ENCODE measurements at regions of chr3 and their contacts with region 1.

Region 1: DNA sequence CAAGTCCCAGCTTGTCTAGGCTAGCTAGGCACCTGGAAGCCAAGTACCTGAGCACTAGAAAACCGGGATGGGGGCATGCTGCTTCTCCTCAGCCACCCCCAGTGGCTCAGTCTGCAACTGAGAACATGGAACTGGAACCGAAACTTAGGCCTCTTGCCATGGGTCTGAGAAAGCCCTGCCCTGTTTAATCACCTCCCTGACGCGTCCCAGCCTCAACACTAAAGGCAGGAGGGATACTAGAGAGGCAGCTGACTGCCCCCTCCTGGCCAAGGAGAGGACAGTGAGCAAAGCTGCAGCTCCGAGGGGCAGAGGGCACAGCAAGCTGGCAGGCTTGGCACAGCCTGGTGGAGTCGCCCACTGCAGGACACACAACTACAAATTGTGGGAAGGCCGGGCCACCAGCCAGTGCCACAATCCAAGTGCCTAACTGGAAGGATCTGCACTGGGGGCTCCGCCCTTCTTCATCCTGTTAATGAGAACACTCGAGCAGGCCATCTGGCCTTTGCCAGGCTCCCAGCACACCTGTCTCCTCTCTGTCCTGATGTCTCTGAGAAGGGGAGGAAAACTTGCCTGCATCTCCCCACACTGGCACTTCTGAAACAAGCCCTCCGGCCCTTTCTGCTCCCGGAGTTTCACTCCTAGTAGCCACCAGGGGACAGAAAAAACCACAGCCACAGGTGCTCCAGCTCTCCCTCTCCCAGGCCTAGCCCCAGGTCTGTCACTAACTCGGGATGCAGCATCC is 53.7 kb downstream of the BDH1 start:
- DNase-seq: peak; percentile 86
- CTCF ChIP-seq: peak; percentile 81

Region 2: DNA sequence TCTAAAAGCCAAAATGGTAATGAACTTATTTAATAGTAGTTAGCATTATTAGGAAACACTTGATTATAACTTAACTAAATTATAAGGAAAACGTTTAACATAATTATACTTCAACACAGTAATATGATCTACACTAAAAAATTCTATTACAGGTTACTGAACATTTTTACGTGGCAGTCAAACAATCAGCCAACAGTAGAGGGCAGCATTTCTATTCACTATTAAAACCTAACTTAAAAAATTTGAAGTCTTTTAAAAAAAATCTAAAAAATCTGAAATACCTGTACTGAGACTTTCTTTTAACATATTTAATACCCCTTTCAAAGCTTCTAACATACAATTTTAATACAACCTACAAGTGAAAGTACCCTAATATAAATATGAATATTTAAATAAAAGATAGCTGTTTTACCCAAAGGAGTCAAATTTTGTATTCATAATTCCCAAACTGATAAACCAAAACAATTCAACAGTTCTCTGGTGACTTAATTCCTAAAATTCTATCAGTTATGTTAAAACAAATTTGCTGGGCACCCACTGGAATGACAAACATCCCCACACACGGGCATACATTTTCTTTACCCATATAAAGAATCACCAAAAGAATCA is 245.1 kb before region 1 on chr3:
- in situ Hi-C with region 1: loop called (anchors 10 kb)
- DNase-seq: peak; percentile 13
- CTCF ChIP-seq: peak; percentile 58

Region 3: DNA sequence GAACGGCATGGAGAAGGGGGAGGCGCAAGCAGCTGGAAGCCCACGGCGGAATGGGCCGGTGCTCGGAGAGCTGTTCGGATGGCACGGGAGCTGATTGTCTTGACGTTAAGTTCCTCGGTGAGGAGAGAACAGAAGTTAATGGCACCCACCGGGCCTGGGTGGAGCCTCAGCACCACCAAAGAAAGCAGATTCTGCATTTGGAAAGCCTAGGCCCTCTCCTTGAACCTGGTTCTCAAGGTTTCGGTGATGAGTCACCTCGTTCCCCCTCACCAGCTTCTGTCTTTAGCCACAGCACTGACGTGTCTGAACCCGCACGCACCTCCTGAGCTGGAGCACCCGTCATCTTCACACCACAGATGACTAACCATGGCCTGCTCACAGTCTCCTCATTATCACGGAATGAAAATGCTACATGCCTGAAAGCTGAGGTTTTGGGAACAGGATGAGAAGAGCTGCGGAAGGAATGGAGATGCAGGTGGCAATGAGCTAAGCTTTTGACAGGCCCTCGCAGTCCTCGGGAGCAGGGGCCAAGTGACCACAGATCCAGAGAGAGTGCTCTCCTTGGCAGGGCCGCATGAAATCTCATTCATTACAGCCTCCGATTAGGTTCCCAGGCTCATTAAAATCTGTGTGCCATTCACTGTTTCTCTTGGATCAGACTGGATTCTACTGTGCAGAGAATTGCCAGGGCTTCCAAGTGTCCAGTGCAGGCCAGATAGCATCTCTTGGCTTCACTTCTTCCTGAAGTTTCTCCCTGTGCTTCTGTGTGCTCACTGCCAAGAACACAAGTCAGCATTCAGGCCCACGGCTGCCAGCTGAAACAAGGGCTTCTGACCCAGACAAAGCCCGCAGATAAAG is 107.4 kb before region 1 on chr3:
- in situ Hi-C with region 1: no loop called
- DNase-seq: peak; percentile 80
- CTCF ChIP-seq: no peak